IMR-90 (cell line): ENCODE measurements at regions of chr12 and their contacts with region 1.

Region 1: GRCh38 chr12:11067514-11067913 is 5.4 kb upstream of the TAS2R46 start:
- DNase-seq: peak; percentile 10
- ATAC-seq: no peak; the same call in 1 of the 2 replicates
- H3K4me3 ChIP-seq: no peak overlapping the region
- H3K27ac ChIP-seq: no peak overlapping the region
- H3K4me1 ChIP-seq: no peaks in the 10 kb centered on the region
- H3K27me3 ChIP-seq: no peaks in the 10 kb centered on the region
- CTCF ChIP-seq: no peak
- POLR2A ChIP-seq: no peak
- RAD21 ChIP-seq: no peak

Region 2: GRCh38 chr12:11015775-11016430 is 51.6 kb before region 1 on chr12:
- CTCF ChIA-PET with region 1: no interaction called
- POLR2A ChIA-PET with region 1: no interaction called
- dilution Hi-C with region 1: no loop called
- in situ Hi-C with region 1: no loop called
- intact Hi-C with region 1: loop called (anchors 1 kb)
- DNase-seq: no peak
- ATAC-seq: no peak
- H3K4me3 ChIP-seq: no peak overlapping the region
- H3K27ac ChIP-seq: no peak overlapping the region
- H3K4me1 ChIP-seq: no peaks in the 10 kb centered on the region; the same call in 1 of the 2 replicates
- H3K27me3 ChIP-seq: no peaks in the 10 kb centered on the region
- CTCF ChIP-seq: no peak
- POLR2A ChIP-seq: no peak
- RAD21 ChIP-seq: no peak

Region 3: GRCh38 chr12:11039171-11039570 is 28.3 kb before region 1 on chr12:
- CTCF ChIA-PET with region 1: no interaction called
- POLR2A ChIA-PET with region 1: no interaction called
- dilution Hi-C with region 1: no loop called
- in situ Hi-C with region 1: no loop called
- intact Hi-C with region 1: loop called (anchors 1 kb)
- DNase-seq: no peak
- ATAC-seq: no peak
- H3K4me3 ChIP-seq: no peak overlapping the region
- H3K27ac ChIP-seq: no peak overlapping the region
- H3K4me1 ChIP-seq: 0 out of 2 replicates have a peak, but pooled peaks cover 2% of the 10 kb centered on the region
- H3K27me3 ChIP-seq: no peaks in the 10 kb centered on the region
- CTCF ChIP-seq: no peak
- POLR2A ChIP-seq: no peak
- RAD21 ChIP-seq: no peak